ENCODE measurements at regions of chr4 and their contacts with region 1.

Region 1: GRCh38 chr4:67727124-67727850 is 26.3 kb upstream of the UBA6 start:
- DNase-seq: no peak
- ATAC-seq: no peak
- H3K4me3 ChIP-seq: no peak overlapping the region
- H3K4me3 Mint-ChIP-seq: no peak overlapping the region
- H3K27ac ChIP-seq: no peak overlapping the region
- H3K27ac Mint-ChIP-seq: no peak overlapping the region
- H3K4me1 ChIP-seq: no peaks in the 10 kb centered on the region
- H3K4me1 Mint-ChIP-seq: no peaks in the 10 kb centered on the region
- H3K27me3 ChIP-seq: no peaks in the 10 kb centered on the region
- H3K27me3 Mint-ChIP-seq: no peaks in the 10 kb centered on the region

Region 2: DNA sequence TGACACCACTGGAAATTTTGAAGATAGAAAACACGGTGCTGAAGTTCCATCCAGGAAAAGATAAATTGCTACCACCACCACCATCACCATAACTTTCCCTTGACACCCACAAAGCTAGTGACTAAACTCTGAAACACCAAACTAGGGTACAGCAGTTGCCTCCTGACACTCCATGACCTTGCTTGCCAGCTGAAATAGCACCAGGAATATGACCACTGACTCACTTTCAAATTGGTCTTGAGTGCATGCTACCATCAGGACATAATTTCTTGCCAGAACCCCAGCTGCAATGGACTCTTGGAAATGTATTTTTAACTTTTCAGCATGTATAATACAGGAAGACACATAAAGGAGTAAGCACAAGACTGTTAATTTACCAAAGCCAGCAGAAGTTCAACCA is 465.3 kb before region 1 on chr4:
- CTCF ChIA-PET with region 1: no interaction called
- POLR2A ChIA-PET with region 1: no interaction called
- DNase-seq: no peak
- ATAC-seq: no peak
- H3K4me3 ChIP-seq: no peak overlapping the region
- H3K4me3 Mint-ChIP-seq: no peak overlapping the region
- H3K27ac ChIP-seq: no peak overlapping the region
- H3K27ac Mint-ChIP-seq: no peak overlapping the region
- H3K4me1 ChIP-seq: no peaks in the 10 kb centered on the region
- H3K4me1 Mint-ChIP-seq: no peaks in the 10 kb centered on the region
- H3K27me3 ChIP-seq: no peaks in the 10 kb centered on the region
- H3K27me3 Mint-ChIP-seq: peaks cover 0 to 5% of the 10 kb centered on the region in 2 donors

Region 3: DNA sequence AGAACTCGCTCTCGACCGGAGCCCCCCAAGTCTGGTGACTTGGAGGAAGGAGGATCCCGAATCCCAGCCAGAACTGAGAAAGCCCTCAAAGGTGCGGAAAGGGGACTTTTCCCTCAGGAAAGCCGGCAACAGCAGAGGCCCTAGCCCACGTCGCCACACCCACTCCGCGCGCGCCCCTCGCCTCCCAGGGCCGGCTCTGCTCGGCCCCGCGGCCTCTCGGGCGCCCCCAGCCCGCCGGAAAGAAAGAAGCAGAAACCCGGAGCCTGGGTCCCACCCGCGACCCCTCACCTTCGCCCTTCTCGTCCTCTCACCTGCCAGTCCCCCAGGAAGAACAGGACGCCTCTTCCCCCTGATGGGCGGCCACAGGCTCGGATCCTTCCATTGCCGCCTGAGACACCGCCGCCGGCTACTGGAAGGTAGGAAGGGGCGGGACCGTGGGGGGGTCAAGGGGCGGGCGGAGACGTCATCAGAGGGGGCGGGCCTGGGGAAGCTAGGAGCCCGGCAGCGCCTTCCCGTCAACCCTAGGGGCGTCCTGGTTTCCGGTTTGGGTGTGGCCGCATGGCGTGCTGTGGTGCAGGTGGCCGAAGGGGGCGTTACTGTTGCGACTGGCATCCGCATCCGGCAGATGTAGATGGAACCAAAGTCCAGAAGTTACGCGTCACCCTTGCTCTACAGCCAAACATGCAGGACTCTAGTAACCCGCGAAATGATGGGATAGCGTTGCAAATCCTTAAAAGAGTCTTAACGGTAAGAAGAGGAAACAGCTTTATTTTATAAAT is 26.4 kb before region 1 on chr4 and contains the start of gene UBA6:
- CTCF ChIA-PET with region 1: no interaction called
- POLR2A ChIA-PET with region 1: interaction called in 1 of 2 experiments, 11 read pairs
- DNase-seq: peak; percentile 83 to 96 (median 91)
- ATAC-seq: peak; percentile 98
- H3K4me3 ChIP-seq: peak within 1 kb of the TSS; percentile 88 to 95
- H3K4me3 Mint-ChIP-seq: peak within 1 kb of the TSS; percentile 96 to 97 (median 97)
- H3K27ac ChIP-seq: peak within 1 kb of the TSS; percentile 74
- H3K27ac Mint-ChIP-seq: peak within 1 kb of the TSS; percentile 94 to 98
- H3K4me1 ChIP-seq: peaks cover 16% of the 10 kb centered on the region in 2 experiments
- H3K4me1 Mint-ChIP-seq: peaks cover 67 to 71% (median 70%) of the 10 kb centered on the region in 3 donors
- H3K27me3 ChIP-seq: no peaks in the 10 kb centered on the region
- H3K27me3 Mint-ChIP-seq: no peaks in the 10 kb centered on the region
- total RNA-seq, gene UBA6: 42.3 to 48.4 (median 43.0) TPM

Region 4: GRCh38 chr4:67779631-67780030 is 52.3 kb after region 1 on chr4:
- CTCF ChIA-PET with region 1: no interaction called
- POLR2A ChIA-PET with region 1: no interaction called
- DNase-seq: no peak
- ATAC-seq: no peak
- H3K4me3 ChIP-seq: no peak overlapping the region
- H3K4me3 Mint-ChIP-seq: no peak overlapping the region
- H3K27ac ChIP-seq: no peak overlapping the region
- H3K27ac Mint-ChIP-seq: no peak overlapping the region
- H3K4me1 ChIP-seq: no peaks in the 10 kb centered on the region
- H3K4me1 Mint-ChIP-seq: no peaks in the 10 kb centered on the region
- H3K27me3 ChIP-seq: no peaks in the 10 kb centered on the region
- H3K27me3 Mint-ChIP-seq: no peaks in the 10 kb centered on the region

Region 5: DNA sequence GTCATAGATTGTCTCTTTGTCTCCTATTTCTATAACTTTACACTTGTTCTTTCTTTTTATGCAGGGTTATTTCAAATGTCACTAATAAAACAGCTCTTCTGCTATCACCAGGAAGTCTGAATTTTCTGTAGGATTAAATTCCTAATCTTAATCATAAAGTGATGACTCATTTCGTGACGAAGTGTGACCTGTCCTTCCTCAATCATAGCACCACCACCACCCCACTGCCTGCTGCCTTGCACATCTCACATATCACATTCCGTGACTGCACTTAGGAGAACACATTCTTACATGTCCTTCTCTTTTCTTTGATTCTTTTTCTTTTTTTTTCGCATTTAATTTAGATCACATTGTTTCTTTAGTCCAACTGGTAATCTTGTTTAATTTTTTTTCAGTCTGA is 1311.3 kb after region 1 on chr4:
- CTCF ChIA-PET with region 1: no interaction called
- POLR2A ChIA-PET with region 1: no interaction called
- DNase-seq: no peak
- ATAC-seq: no peak
- H3K4me3 ChIP-seq: no peak overlapping the region
- H3K4me3 Mint-ChIP-seq: no peak overlapping the region
- H3K27ac ChIP-seq: no peak overlapping the region
- H3K27ac Mint-ChIP-seq: peak overlapping the region in 1 of 2 donors; percentile 6
- H3K4me1 ChIP-seq: no peaks in the 10 kb centered on the region
- H3K4me1 Mint-ChIP-seq: no peaks in the 10 kb centered on the region
- H3K27me3 ChIP-seq: no peaks in the 10 kb centered on the region
- H3K27me3 Mint-ChIP-seq: no peaks in the 10 kb centered on the region